Endothelial cell of umbilical vein (primary cell): ENCODE measurements at regions of chr16 and their contacts with region 1.

Region 1: GRCh38 chr16:25014500-25015147 is 545 bp downstream of the ARHGAP17 start:
- DNase-seq: peak; percentile 59
- H3K4me3 ChIP-seq: peak overlapping the region; percentile 75 to 99 (median 97)
- H3K27ac ChIP-seq: peak overlapping the region; percentile 56
- H3K4me1 ChIP-seq: peaks cover 35% of the 10 kb centered on the region
- H3K27me3 ChIP-seq: no peaks in the 10 kb centered on the region
- CTCF ChIP-seq: no peak
- POLR2A ChIP-seq: peak; percentile 2

Region 2: GRCh38 chr16:24950275-24950674 is 64.3 kb before region 1 on chr16:
- CTCF ChIA-PET with region 1: interaction called, 3 read pairs
- POLR2A ChIA-PET with region 1: no interaction called
- dilution Hi-C with region 1: no loop called
- intact Hi-C with region 1: loop called (anchors 1 kb)
- DNase-seq: no peak
- H3K4me3 ChIP-seq: no peak overlapping the region
- H3K27ac ChIP-seq: no peak overlapping the region
- H3K4me1 ChIP-seq: no peaks in the 10 kb centered on the region
- H3K27me3 ChIP-seq: no peaks in the 10 kb centered on the region
- CTCF ChIP-seq: no peak
- POLR2A ChIP-seq: no peak

Region 3: GRCh38 chr16:24980077-24980793 is 34.4 kb before region 1 on chr16:
- CTCF ChIA-PET with region 1: interaction called, 7 read pairs
- POLR2A ChIA-PET with region 1: interaction called, 4 read pairs
- dilution Hi-C with region 1: no loop called
- intact Hi-C with region 1: loop called (anchors 2 kb)
- DNase-seq: peak; percentile 92
- H3K4me3 ChIP-seq: peak overlapping the region in 1 of 3 experiments; percentile 40
- H3K27ac ChIP-seq: peak overlapping the region; percentile 76
- H3K4me1 ChIP-seq: peaks cover 71% of the 10 kb centered on the region
- H3K27me3 ChIP-seq: no peaks in the 10 kb centered on the region
- CTCF ChIP-seq: no peak
- POLR2A ChIP-seq: no peak

Region 4: DNA sequence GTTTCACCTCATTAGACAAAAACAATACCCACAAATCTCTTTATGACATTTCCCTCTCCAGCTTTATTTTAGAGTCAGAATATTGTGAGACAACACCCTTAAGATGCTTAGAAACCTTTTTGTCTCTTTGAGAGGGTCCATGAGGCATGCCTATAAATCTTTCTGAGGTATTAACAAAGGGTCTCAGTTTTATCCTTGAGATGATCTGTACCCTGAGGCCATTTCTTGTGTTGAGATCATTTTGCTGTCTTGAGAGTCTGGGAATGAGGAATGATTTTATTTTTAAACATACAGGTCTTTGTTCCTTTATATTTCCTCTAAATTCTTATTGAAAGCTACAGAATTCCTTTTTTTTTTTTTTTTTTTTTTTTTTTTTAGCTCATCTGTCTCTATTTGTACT is 497.4 kb after region 1 on chr16:
- CTCF ChIA-PET with region 1: no interaction called
- POLR2A ChIA-PET with region 1: no interaction called
- dilution Hi-C with region 1: no loop called
- intact Hi-C with region 1: no loop called
- DNase-seq: no peak
- H3K4me3 ChIP-seq: no peak overlapping the region
- H3K27ac ChIP-seq: no peak overlapping the region
- H3K4me1 ChIP-seq: no peaks in the 10 kb centered on the region
- H3K27me3 ChIP-seq: no peaks in the 10 kb centered on the region
- CTCF ChIP-seq: no peak
- POLR2A ChIP-seq: no peak

Region 5: DNA sequence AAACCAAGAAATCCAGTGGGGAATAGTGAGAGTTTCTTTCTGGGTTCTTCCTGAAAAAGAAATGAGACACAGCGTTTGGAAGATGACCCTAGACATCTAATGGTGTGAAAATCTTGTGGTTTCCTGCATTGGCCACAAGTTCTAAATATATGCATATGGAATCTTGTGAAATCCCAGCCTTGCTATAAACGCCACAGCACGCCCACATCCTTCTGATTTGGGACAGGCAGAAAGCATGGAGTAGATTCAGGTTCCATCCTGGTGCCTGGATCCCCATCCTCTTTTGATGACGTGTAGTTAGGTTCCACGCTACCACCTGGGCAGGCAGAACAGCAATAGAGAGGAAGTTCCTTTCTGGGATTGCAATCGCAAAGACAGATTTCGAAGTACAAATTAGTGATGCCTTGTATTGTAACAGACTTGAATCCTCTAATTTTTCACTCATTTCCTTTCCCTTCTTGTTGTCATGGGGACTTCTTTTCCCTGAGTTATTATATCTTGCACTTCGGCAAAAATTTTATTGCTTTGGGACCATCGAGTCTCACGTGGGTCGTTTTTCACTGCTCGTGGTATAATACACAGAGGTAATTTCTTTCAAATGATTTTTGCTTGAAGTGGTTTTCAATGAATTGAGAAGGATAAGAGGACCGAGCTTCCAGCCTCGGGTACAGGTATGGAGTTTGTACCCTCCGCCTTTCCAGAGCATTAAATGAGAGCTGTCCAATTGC is 714.7 kb after region 1 on chr16:
- CTCF ChIA-PET with region 1: no interaction called
- POLR2A ChIA-PET with region 1: no interaction called
- dilution Hi-C with region 1: no loop called
- intact Hi-C with region 1: no loop called
- DNase-seq: no peak
- H3K4me3 ChIP-seq: no peak overlapping the region
- H3K27ac ChIP-seq: no peak overlapping the region
- H3K4me1 ChIP-seq: no peaks in the 10 kb centered on the region
- H3K27me3 ChIP-seq: no peaks in the 10 kb centered on the region
- CTCF ChIP-seq: no peak
- POLR2A ChIP-seq: no peak